ENCODE measurements at regions of chr4 and their contacts with region 1.

Region 1: GRCh38 chr4:27629532-27630225 is 769.0 kb downstream of the STIM2 start:
- DNase-seq: no peak
- ATAC-seq: no peak
- H3K4me3 ChIP-seq: no peak overlapping the region
- H3K27ac ChIP-seq: no peak overlapping the region
- H3K4me1 ChIP-seq: no peaks in the 10 kb centered on the region
- H3K27me3 ChIP-seq: no peaks in the 10 kb centered on the region
- CTCF ChIP-seq: no peak
- POLR2A ChIP-seq: no peak
- RAD21 ChIP-seq: no peak

Region 2: GRCh38 chr4:27176400-27176799 is 453.3 kb before region 1 on chr4:
- CTCF ChIA-PET with region 1: no interaction called
- POLR2A ChIA-PET with region 1: no interaction called
- RAD21 ChIA-PET with region 1: no interaction called
- intact Hi-C with region 1: loop called (anchors 5 kb)
- DNase-seq: peak; percentile 26
- ATAC-seq: peak; percentile 91
- H3K4me3 ChIP-seq: no peak overlapping the region
- H3K27ac ChIP-seq: no peak overlapping the region
- H3K4me1 ChIP-seq: no peaks in the 10 kb centered on the region
- H3K27me3 ChIP-seq: no peaks in the 10 kb centered on the region
- CTCF ChIP-seq: peak; percentile 41 to 60 (median 42); a peak in 5 of 6 replicates
- POLR2A ChIP-seq: no peak
- RAD21 ChIP-seq: peak; percentile 78

Region 3: DNA sequence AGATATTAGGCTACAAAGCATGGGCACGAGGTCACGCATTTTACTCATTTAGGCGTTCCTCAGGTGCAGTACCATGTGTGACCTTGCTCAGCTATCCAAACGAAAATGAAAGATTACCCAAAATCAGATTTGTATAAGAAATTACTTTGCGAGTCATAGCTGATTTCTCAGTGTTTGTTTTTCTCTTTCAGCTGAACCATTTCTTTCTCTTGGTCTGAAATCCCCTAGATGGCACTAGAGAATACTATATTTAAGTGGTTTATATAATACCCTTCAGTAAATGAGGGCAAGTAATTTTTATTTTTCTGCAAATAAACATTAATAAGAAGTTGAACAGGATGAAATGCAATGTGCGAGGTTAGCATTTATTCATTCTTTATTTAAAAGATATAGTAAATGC is 272.4 kb before region 1 on chr4:
- CTCF ChIA-PET with region 1: no interaction called
- POLR2A ChIA-PET with region 1: no interaction called
- RAD21 ChIA-PET with region 1: no interaction called
- intact Hi-C with region 1: loop called (anchors 5 kb)
- DNase-seq: no peak
- ATAC-seq: peak; percentile 62; the same call in 1 of the 2 replicates
- H3K4me3 ChIP-seq: no peak overlapping the region
- H3K27ac ChIP-seq: no peak overlapping the region
- H3K4me1 ChIP-seq: peaks cover 0 to 6% of the 10 kb centered on the region in 2 experiments; a peak in 1 of 4 replicates
- H3K27me3 ChIP-seq: no peaks in the 10 kb centered on the region
- CTCF ChIP-seq: peak; percentile 21 to 45 (median 33); a peak in 5 of 6 replicates
- POLR2A ChIP-seq: no peak
- RAD21 ChIP-seq: peak; percentile 62

Region 4: DNA sequence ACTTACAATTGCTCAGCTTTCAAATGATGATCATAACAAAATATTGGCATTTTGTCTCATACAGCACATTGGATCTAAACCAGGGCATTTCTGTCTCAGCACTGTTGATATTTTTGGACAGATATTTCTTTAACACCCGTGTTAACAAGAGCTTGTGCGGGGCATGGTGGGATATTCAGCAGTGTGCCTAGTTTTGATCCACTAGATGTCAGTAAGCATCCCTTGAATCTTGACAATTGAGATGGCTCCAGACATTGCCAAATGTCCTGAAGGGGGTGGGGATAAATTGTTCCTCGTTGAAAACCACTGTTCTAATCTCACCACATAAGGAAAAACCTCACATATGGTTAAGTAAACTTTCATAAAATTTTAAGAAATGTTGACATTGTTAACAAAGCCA is 37.3 kb after region 1 on chr4:
- CTCF ChIA-PET with region 1: no interaction called
- POLR2A ChIA-PET with region 1: no interaction called
- RAD21 ChIA-PET with region 1: no interaction called
- intact Hi-C with region 1: no loop called
- DNase-seq: peak; percentile 61
- ATAC-seq: peak; percentile 99
- H3K4me3 ChIP-seq: no peak overlapping the region
- H3K27ac ChIP-seq: no peak overlapping the region
- H3K4me1 ChIP-seq: no peaks in the 10 kb centered on the region
- H3K27me3 ChIP-seq: no peaks in the 10 kb centered on the region
- CTCF ChIP-seq: peak; percentile 24 to 64 (median 61); a peak in 5 of 6 replicates
- POLR2A ChIP-seq: no peak
- RAD21 ChIP-seq: peak; percentile 50